GM12878 (cell line): ENCODE measurements at regions of chr12 and their contacts with region 1.

Region 1: GRCh38 chr12:1787714-1788113 is 32.7 kb upstream of the LRTM2 start:
- DNase-seq: no peak
- ATAC-seq: no peak
- H3K4me3 ChIP-seq: no peak overlapping the region
- H3K27ac ChIP-seq: no peak overlapping the region
- H3K4me1 ChIP-seq: peaks cover 3% of the 10 kb centered on the region
- H3K27me3 ChIP-seq: no peaks in the 10 kb centered on the region
- CTCF ChIP-seq: no peak
- EP300 ChIP-seq: no peak
- POLR2A ChIP-seq: no peak
- RAD21 ChIP-seq: no peak

Region 2: GRCh38 chr12:1644534-1645438 is 142.9 kb before region 1 on chr12:
- CTCF ChIA-PET with region 1: interaction called, 434 read pairs
- POLR2A ChIA-PET with region 1: interaction called, 5 read pairs
- RAD21 ChIA-PET with region 1: interaction called, 234 read pairs
- SMC1A ChIA-PET with region 1: interaction called, 202 read pairs
- in situ Hi-C with region 1: loop called (anchors 5 kb)
- intact Hi-C with region 1: no loop called
- DNase-seq: no peak
- ATAC-seq: no peak
- H3K4me3 ChIP-seq: no peak overlapping the region
- H3K27ac ChIP-seq: no peak overlapping the region
- H3K4me1 ChIP-seq: no peaks in the 10 kb centered on the region
- H3K27me3 ChIP-seq: no peaks in the 10 kb centered on the region
- CTCF ChIP-seq: no peak
- EP300 ChIP-seq: no peak
- POLR2A ChIP-seq: no peak
- RAD21 ChIP-seq: no peak

Region 3: GRCh38 chr12:2319742-2320506 is 532.2 kb after region 1 on chr12:
- CTCF ChIA-PET with region 1: no interaction called
- POLR2A ChIA-PET with region 1: no interaction called
- RAD21 ChIA-PET with region 1: no interaction called
- SMC1A ChIA-PET with region 1: no interaction called
- in situ Hi-C with region 1: no loop called
- intact Hi-C with region 1: no loop called
- DNase-seq: no peak
- ATAC-seq: no peak
- H3K4me3 ChIP-seq: no peak overlapping the region
- H3K27ac ChIP-seq: no peak overlapping the region
- H3K4me1 ChIP-seq: no peaks in the 10 kb centered on the region
- H3K27me3 ChIP-seq: peaks cover 0 to 4% of the 10 kb centered on the region in 2 experiments; a peak in 2 of 4 replicates
- CTCF ChIP-seq: no peak; a peak in 1 of 6 replicates
- EP300 ChIP-seq: no peak
- POLR2A ChIP-seq: no peak
- RAD21 ChIP-seq: no peak